Activated T-helper 1 cell treated with anti-CD3 and anti-CD28 coated beads, Interleukin-12 subunit alpha, Interleukin-12 subunit beta, Interleukin-2, Interleukin-4 antibody, amounts not matched to agents 30 ng/mL and 10 ng/mL and 1 ng/mL, durations not matched to agents 14 hours and 24 hours and 36 hours (primary cell): ENCODE measurements at regions of chr12 and their contacts with region 1.

Region 1: GRCh38 chr12:27109334-27110028 is 27.1 kb upstream of the C12orf71 start:
- DNase-seq: no peak
- H3K4me3 Mint-ChIP-seq: no peak overlapping the region
- H3K27ac Mint-ChIP-seq: no peak overlapping the region
- H3K4me1 Mint-ChIP-seq: peaks cover 11% of the 10 kb centered on the region
- H3K27me3 Mint-ChIP-seq: peaks cover 1% of the 10 kb centered on the region

Region 2: GRCh38 chr12:27024291-27024690 is 85.2 kb before region 1 on chr12:
- intact Hi-C with region 1: loop called (anchors 5 kb)
- DNase-seq: no peak
- H3K4me3 Mint-ChIP-seq: peak overlapping the region; percentile 43
- H3K27ac Mint-ChIP-seq: no peak overlapping the region
- H3K4me1 Mint-ChIP-seq: peaks cover 46% of the 10 kb centered on the region
- H3K27me3 Mint-ChIP-seq: peaks cover 2% of the 10 kb centered on the region

Region 3: GRCh38 chr12:27158297-27158696 is 48.8 kb after region 1 on chr12:
- intact Hi-C with region 1: no loop called
- DNase-seq: no peak
- H3K4me3 Mint-ChIP-seq: no peak overlapping the region
- H3K27ac Mint-ChIP-seq: no peak overlapping the region
- H3K4me1 Mint-ChIP-seq: no peaks in the 10 kb centered on the region
- H3K27me3 Mint-ChIP-seq: peaks cover 5% of the 10 kb centered on the region